ENCODE measurements at regions of chrX and their contacts with region 1.

Region 1: GRCh38 chrX:71365876-71366673 is at the start of gene TAF1:
- DNase-seq: peak; percentile 85 to 96 (median 93)
- H3K4me3 ChIP-seq: peak within 1 kb of the TSS; percentile 52 to 82
- H3K4me3 Mint-ChIP-seq: peak within 1 kb of the TSS; percentile 86 to 100 (median 96)
- H3K27ac ChIP-seq: peak within 1 kb of the TSS; percentile 86
- H3K27ac Mint-ChIP-seq: peak within 1 kb of the TSS; percentile 97 to 99 (median 98)
- H3K4me1 ChIP-seq: peaks cover 31% of the 10 kb centered on the region
- H3K4me1 Mint-ChIP-seq: peaks cover 14 to 35% (median 24%) of the 10 kb centered on the region in 4 donors
- H3K27me3 ChIP-seq: no peaks in the 10 kb centered on the region
- H3K27me3 Mint-ChIP-seq: no peaks in the 10 kb centered on the region
- total RNA-seq, gene TAF1: 73.6 to 81.8 TPM

Region 2: DNA sequence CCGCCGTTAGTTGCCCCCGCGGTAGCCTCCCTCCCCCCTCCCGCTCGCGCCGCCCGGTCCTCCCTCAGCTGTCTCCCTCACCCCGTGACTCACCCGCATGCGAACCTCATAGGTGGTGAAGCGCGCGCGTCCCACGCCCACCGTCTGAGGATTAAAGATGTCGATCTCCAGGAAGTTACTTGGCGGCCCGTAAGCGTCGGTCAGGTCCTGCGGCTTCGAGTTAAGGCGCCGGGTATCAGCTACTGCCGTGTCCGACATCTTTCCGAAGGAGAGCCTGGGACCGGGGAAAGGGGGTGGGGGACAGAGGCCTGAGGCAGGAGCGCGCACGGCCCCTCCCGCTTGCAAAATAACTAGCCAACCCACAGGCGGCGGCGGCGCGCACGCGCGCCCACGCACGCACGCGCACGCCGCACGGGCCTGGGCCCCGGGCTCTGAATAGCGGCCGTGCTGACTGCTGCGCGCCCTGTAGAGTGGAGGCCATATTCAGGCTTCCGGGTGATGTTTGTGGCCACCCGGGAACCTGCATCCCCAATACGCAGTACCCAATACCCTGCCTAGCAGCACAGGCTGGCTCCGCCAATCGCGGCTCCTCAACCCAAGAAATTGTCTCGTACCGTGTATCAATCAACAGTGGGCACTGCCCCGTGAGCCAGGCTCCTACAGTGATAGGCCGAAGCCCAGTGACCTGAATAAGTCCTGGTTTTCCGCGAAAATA is 297.9 kb before region 1 on chrX and contains the start of gene SNX12:
- CTCF ChIA-PET with region 1: no interaction called
- POLR2A ChIA-PET with region 1: interaction called, 11 read pairs
- intact Hi-C with region 1: loop called (anchors 1 kb)
- DNase-seq: peak; percentile 88 to 93 (median 91)
- H3K4me3 ChIP-seq: peak within 1 kb of the TSS; percentile 53 to 69
- H3K4me3 Mint-ChIP-seq: peak within 1 kb of the TSS; percentile 88 to 97 (median 93)
- H3K27ac ChIP-seq: peak within 1 kb of the TSS; percentile 84
- H3K27ac Mint-ChIP-seq: peak within 1 kb of the TSS; percentile 93 to 98 (median 97)
- H3K4me1 ChIP-seq: peaks cover 16% of the 10 kb centered on the region
- H3K4me1 Mint-ChIP-seq: peaks cover 2 to 33% (median 14%) of the 10 kb centered on the region in 4 donors
- H3K27me3 ChIP-seq: no peaks in the 10 kb centered on the region
- H3K27me3 Mint-ChIP-seq: no peaks in the 10 kb centered on the region
- total RNA-seq, gene SNX12: 36.7 to 36.9 TPM

Region 3: GRCh38 chrX:71111141-71111843 is 254.8 kb before region 1 on chrX and contains the start of gene IL2RG:
- CTCF ChIA-PET with region 1: no interaction called
- POLR2A ChIA-PET with region 1: interaction called, 11 read pairs
- intact Hi-C with region 1: loop called (anchors 2 kb)
- DNase-seq: peak; percentile 89 to 95 (median 93)
- H3K4me3 ChIP-seq: peak within 1 kb of the TSS; percentile 81 to 93
- H3K4me3 Mint-ChIP-seq: peak within 1 kb of the TSS; percentile 90 to 99 (median 95)
- H3K27ac ChIP-seq: peak within 1 kb of the TSS; percentile 96
- H3K27ac Mint-ChIP-seq: peak within 1 kb of the TSS; percentile 97 to 99 (median 99)
- H3K4me1 ChIP-seq: peaks cover 46% of the 10 kb centered on the region
- H3K4me1 Mint-ChIP-seq: peaks cover 24 to 69% (median 53%) of the 10 kb centered on the region in 4 donors
- H3K27me3 ChIP-seq: no peaks in the 10 kb centered on the region
- H3K27me3 Mint-ChIP-seq: no peaks in the 10 kb centered on the region
- total RNA-seq, gene IL2RG: 378 to 379 TPM

Region 4: GRCh38 chrX:71198066-71198465 is 168.0 kb before region 1 on chrX:
- CTCF ChIA-PET with region 1: no interaction called
- POLR2A ChIA-PET with region 1: interaction called, 28 read pairs
- intact Hi-C with region 1: no loop called
- DNase-seq: peak in 2 of 5 donors; percentile 15 to 23
- H3K4me3 ChIP-seq: peak overlapping the region; percentile 29 to 60
- H3K4me3 Mint-ChIP-seq: peak overlapping the region; percentile 85 to 96 (median 90)
- H3K27ac ChIP-seq: peak overlapping the region; percentile 61
- H3K27ac Mint-ChIP-seq: peak overlapping the region; percentile 86 to 95 (median 89)
- H3K4me1 ChIP-seq: peaks cover 8% of the 10 kb centered on the region
- H3K4me1 Mint-ChIP-seq: peaks cover 11 to 34% (median 21%) of the 10 kb centered on the region in 4 donors
- H3K27me3 ChIP-seq: no peaks in the 10 kb centered on the region
- H3K27me3 Mint-ChIP-seq: no peaks in the 10 kb centered on the region

Region 5: GRCh38 chrX:71283403-71284143 is 82.5 kb before region 1 on chrX and contains the start of gene NONO:
- CTCF ChIA-PET with region 1: interaction called, 3 read pairs
- POLR2A ChIA-PET with region 1: interaction called, 52 read pairs
- intact Hi-C with region 1: loop called (anchors 1 kb)
- DNase-seq: peak; percentile 86 to 95 (median 92)
- H3K4me3 ChIP-seq: peak within 1 kb of the TSS; percentile 62 to 63
- H3K4me3 Mint-ChIP-seq: peak within 1 kb of the TSS; percentile 96 to 100 (median 98)
- H3K27ac ChIP-seq: peak within 1 kb of the TSS; percentile 95
- H3K27ac Mint-ChIP-seq: peak within 1 kb of the TSS; percentile 97 to 100 (median 99)
- H3K4me1 ChIP-seq: peaks cover 34% of the 10 kb centered on the region
- H3K4me1 Mint-ChIP-seq: peaks cover 7 to 42% (median 13%) of the 10 kb centered on the region in 4 donors
- H3K27me3 ChIP-seq: no peaks in the 10 kb centered on the region
- H3K27me3 Mint-ChIP-seq: no peaks in the 10 kb centered on the region
- total RNA-seq, gene NONO: 300 to 314 TPM